Activated CD4-positive, alpha-beta T cell treated with anti-CD3 and anti-CD28 coated beads for 36 hours (primary cell): ENCODE measurements at regions of chr19 and their contacts with region 1.

Region 1: DNA sequence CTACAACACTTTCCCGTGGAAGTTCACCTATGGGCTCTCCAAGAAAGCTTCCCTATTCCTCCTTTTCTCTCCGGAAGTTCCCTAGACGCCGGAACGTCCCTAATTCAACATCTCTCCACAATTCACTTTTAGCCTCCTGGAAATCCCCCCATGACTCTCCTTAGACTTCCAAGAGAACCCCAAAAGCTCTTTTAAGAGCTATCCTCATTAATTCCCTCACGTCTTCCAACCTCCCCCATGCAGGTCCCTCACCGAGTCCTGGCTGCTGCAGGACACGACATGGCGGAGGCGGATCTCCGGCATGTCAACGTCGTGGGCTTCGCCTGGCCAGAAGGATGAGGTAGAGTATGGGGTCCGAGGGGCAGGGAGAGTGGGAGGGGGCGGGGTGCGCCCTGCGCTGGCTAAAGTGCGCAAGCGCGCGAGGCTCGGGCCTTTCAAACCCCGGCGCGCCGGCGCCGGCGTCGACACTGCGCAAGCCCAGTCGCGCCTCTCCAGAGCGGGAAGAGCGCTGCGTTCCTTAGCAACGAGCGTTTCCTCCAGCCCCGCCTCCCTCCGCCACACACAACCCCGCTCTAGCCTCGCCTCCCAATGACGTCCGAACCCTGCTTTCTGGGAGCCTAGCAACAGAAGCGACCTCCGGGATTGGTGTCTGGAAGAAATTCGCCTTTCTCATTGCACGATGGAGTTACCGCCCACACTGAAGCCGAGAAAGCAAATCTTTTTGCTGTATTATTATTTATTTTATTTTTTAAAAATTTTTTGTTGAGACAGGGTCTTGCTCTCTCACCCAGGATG is at the starts of genes PINLYP and XRCC1:
- DNase-seq: peak; percentile 99
- ATAC-seq: peak; percentile 99
- H3K4me3 Mint-ChIP-seq: peak within 1 kb of the TSS; percentile 87
- H3K27ac Mint-ChIP-seq: peak within 1 kb of the TSS; percentile 94
- H3K4me1 Mint-ChIP-seq: peaks cover 41% of the 10 kb centered on the region
- H3K27me3 Mint-ChIP-seq: no peaks in the 10 kb centered on the region
- total RNA-seq, gene PINLYP: 3.5 to 3.6 TPM
- total RNA-seq, gene XRCC1: 31.6 to 40.0 TPM

Region 2: GRCh38 chr19:43337737-43338136 is 237.6 kb before region 1 on chr19:
- CTCF ChIA-PET with region 1: no interaction called
- POLR2A ChIA-PET with region 1: no interaction called
- intact Hi-C with region 1: no loop called
- DNase-seq: no peak
- ATAC-seq: no peak
- H3K4me3 Mint-ChIP-seq: no peak overlapping the region
- H3K27ac Mint-ChIP-seq: no peak overlapping the region
- H3K4me1 Mint-ChIP-seq: no peaks in the 10 kb centered on the region
- H3K27me3 Mint-ChIP-seq: peaks cover 11% of the 10 kb centered on the region

Region 3: GRCh38 chr19:43562698-43563241 is 12.6 kb before region 1 on chr19:
- CTCF ChIA-PET with region 1: interaction called, 33 read pairs
- POLR2A ChIA-PET with region 1: interaction called, 4 read pairs
- intact Hi-C with region 1: loop called in 1 of 2 experiments (anchors 1 kb)
- DNase-seq: peak; percentile 82
- ATAC-seq: peak; percentile 90
- H3K4me3 Mint-ChIP-seq: no peak overlapping the region
- H3K27ac Mint-ChIP-seq: peak overlapping the region; percentile 94
- H3K4me1 Mint-ChIP-seq: peaks cover 46% of the 10 kb centered on the region
- H3K27me3 Mint-ChIP-seq: no peaks in the 10 kb centered on the region

Region 4: GRCh38 chr19:43619262-43620060 is 44.1 kb after region 1 on chr19 and contains the start of gene ZNF428:
- CTCF ChIA-PET with region 1: no interaction called
- POLR2A ChIA-PET with region 1: no interaction called
- intact Hi-C with region 1: loop called (anchors 1 to 2 kb)
- DNase-seq: peak; percentile 94
- ATAC-seq: peak; percentile 92
- H3K4me3 Mint-ChIP-seq: peak within 1 kb of the TSS; percentile 94
- H3K27ac Mint-ChIP-seq: peak within 1 kb of the TSS; percentile 99
- H3K4me1 Mint-ChIP-seq: peaks cover 17% of the 10 kb centered on the region
- H3K27me3 Mint-ChIP-seq: no peaks in the 10 kb centered on the region
- total RNA-seq, gene ZNF428: 9.0 to 10.1 TPM